BJ (cell line): ENCODE measurements at regions of chr1 and their contacts with region 1.

Region 1: GRCh38 chr1:27603681-27604578 is at the start of gene AHDC1:
- DNase-seq: no peak
- H3K4me3 ChIP-seq: peak within 1 kb of the TSS; percentile 82
- H3K27me3 ChIP-seq: no peaks in the 10 kb centered on the region
- CTCF ChIP-seq: peak; percentile 18; the same call in 1 of the 2 replicates
- polyA plus RNA-seq, gene AHDC1: 3.5 and 4.1 TPM in 2 replicates

Region 2: GRCh38 chr1:27402349-27402754 is 201.6 kb before region 1 on chr1:
- CTCF ChIA-PET with region 1: interaction called, 92 read pairs
- POLR2A ChIA-PET with region 1: no interaction called
- DNase-seq: no peak
- H3K4me3 ChIP-seq: no peak overlapping the region
- H3K27me3 ChIP-seq: no peaks in the 10 kb centered on the region
- CTCF ChIP-seq: peak; percentile 79

Region 3: GRCh38 chr1:27525296-27526272 is 78.3 kb before region 1 on chr1:
- CTCF ChIA-PET with region 1: interaction called, 16 read pairs
- POLR2A ChIA-PET with region 1: interaction called, 3 read pairs
- DNase-seq: no peak
- H3K4me3 ChIP-seq: no peak overlapping the region
- H3K27me3 ChIP-seq: no peaks in the 10 kb centered on the region
- CTCF ChIP-seq: no peak

Region 4: DNA sequence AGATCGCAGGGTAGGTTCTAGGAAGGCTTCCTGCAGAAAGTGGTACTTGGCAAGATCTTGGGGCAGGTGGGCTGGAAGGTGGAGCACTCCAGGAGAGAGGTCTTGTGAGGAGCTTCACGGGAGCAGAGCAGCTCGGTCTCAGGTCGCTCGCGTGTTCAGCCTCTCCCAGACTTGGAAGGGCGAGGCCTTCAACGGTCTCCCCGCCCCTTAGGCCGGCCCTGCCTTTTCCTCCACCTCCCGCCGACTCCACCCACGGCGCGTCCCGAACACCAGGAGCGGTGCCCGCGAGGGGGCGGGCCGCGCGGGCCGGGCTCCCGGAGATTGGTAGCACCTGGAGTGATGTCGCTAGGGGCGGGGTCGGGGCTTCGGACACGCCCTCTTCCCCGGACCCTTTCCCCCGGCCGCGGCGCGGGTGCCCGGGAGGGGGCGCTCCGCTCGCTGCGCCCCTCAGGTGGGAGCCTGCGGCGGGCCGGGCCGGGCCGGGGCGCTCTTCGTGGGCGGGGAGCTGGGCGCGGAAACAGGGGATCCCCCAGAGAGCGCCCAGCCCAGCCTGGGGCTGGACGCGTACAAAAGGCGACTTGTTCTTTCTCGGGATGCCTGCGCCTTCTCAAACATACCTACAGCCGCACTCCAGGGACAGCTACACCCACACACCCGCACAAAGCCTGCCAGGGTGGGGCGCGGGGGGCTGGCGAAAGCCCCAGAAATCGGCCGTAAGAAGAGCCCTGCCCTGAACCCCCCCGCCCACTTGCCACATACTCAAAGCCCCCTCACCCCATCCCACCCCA is 35.4 kb before region 1 on chr1:
- CTCF ChIA-PET with region 1: interaction called, 33 read pairs
- POLR2A ChIA-PET with region 1: no interaction called
- DNase-seq: peak; percentile 60
- H3K4me3 ChIP-seq: peak overlapping the region; percentile 17
- H3K27me3 ChIP-seq: no peaks in the 10 kb centered on the region
- CTCF ChIP-seq: peak; percentile 47; the same call in 1 of the 2 replicates

Region 5: GRCh38 chr1:27662707-27663393 is 58.9 kb after region 1 on chr1:
- CTCF ChIA-PET with region 1: interaction called, 223 read pairs
- POLR2A ChIA-PET with region 1: no interaction called
- DNase-seq: no peak
- H3K4me3 ChIP-seq: no peak overlapping the region
- H3K27me3 ChIP-seq: no peaks in the 10 kb centered on the region
- CTCF ChIP-seq: peak; percentile 86